ENCODE measurements at regions of chr10 and their contacts with region 1.

Region 1: DNA sequence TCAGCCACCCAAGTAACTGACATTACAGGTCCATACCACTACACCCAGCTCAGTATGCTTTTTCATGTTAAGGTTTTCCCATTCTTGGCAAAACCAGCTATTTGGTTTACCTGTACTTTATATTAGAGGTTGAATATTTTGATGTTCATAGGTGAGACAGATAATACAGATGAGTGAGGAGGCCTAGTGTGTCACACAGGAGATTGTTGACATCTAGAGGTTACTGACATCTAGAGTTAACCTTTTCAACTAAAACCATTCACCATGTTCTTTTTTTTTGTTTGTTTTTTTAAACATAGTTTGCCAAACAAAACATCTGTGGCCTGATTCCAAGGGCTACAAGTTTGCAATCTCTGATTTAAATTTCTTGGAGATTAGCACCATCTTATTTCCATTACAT is 8.0 kb downstream of the GHITM start:
- DNase-seq: no peak
- ATAC-seq: no peak
- H3K4me3 Mint-ChIP-seq: no peak overlapping the region
- H3K27ac Mint-ChIP-seq: no peak overlapping the region
- H3K4me1 Mint-ChIP-seq: peaks cover 5% of the 10 kb centered on the region
- H3K27me3 Mint-ChIP-seq: no peaks in the 10 kb centered on the region
- CTCF ChIP-seq: no peak

Region 2: DNA sequence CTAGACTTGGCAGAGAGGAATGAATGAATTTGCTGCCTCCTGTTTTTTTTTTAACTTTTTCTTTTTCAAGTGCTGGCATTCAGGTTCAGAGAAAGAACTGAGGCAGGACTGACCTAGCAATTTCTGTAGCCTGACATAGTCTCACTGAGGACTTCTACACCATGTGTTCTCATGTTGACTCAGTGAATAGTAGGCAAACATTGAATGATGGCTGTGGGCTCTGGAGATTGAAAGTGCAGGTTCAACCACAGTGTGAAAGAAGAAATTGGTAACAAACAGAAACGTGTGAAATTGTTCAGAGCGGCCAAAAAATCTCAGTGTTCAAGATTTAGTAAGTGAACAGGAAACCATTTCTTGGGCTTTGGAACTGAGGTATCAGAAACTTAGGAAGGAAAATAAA is 330.4 kb before region 1 on chr10:
- CTCF ChIA-PET with region 1: no interaction called
- POLR2A ChIA-PET with region 1: no interaction called
- intact Hi-C with region 1: no loop called
- DNase-seq: no peak
- ATAC-seq: no peak
- H3K4me3 Mint-ChIP-seq: no peak overlapping the region
- H3K27ac Mint-ChIP-seq: no peak overlapping the region
- H3K4me1 Mint-ChIP-seq: no peaks in the 10 kb centered on the region
- H3K27me3 Mint-ChIP-seq: no peaks in the 10 kb centered on the region
- CTCF ChIP-seq: no peak

Region 3: GRCh38 chr10:84163996-84164395 is 16.6 kb after region 1 on chr10:
- CTCF ChIA-PET with region 1: interaction called, 10 read pairs
- POLR2A ChIA-PET with region 1: interaction called, 3 read pairs
- intact Hi-C with region 1: no loop called
- DNase-seq: no peak
- ATAC-seq: no peak
- H3K4me3 Mint-ChIP-seq: no peak overlapping the region
- H3K27ac Mint-ChIP-seq: no peak overlapping the region
- H3K4me1 Mint-ChIP-seq: peaks cover 26% of the 10 kb centered on the region
- H3K27me3 Mint-ChIP-seq: peaks cover 6% of the 10 kb centered on the region
- CTCF ChIP-seq: no peak

Region 4: GRCh38 chr10:84194424-84195040 is 47.2 kb after region 1 on chr10 and contains the start of gene CDHR1:
- CTCF ChIA-PET with region 1: interaction called, 15 read pairs
- POLR2A ChIA-PET with region 1: no interaction called
- intact Hi-C with region 1: no loop called
- DNase-seq: peak; percentile 34
- ATAC-seq: peak; percentile 80
- H3K4me3 Mint-ChIP-seq: peak within 1 kb of the TSS; percentile 60
- H3K27ac Mint-ChIP-seq: no peak within 1 kb of the TSS
- H3K4me1 Mint-ChIP-seq: peaks cover 7% of the 10 kb centered on the region
- H3K27me3 Mint-ChIP-seq: peaks cover 39% of the 10 kb centered on the region
- CTCF ChIP-seq: no peak
- total RNA-seq, gene CDHR1: 2.8 and 3.7 TPM in 2 replicates

Region 5: GRCh38 chr10:84205049-84205852 is 57.9 kb after region 1 on chr10:
- CTCF ChIA-PET with region 1: interaction called, 90 read pairs
- POLR2A ChIA-PET with region 1: interaction called, 5 read pairs
- intact Hi-C with region 1: loop called (anchors 1 kb)
- DNase-seq: peak; percentile 49
- ATAC-seq: peak; percentile 88
- H3K4me3 Mint-ChIP-seq: no peak overlapping the region
- H3K27ac Mint-ChIP-seq: no peak overlapping the region
- H3K4me1 Mint-ChIP-seq: no peaks in the 10 kb centered on the region
- H3K27me3 Mint-ChIP-seq: peaks cover 13% of the 10 kb centered on the region
- CTCF ChIP-seq: no peak

Region 6: DNA sequence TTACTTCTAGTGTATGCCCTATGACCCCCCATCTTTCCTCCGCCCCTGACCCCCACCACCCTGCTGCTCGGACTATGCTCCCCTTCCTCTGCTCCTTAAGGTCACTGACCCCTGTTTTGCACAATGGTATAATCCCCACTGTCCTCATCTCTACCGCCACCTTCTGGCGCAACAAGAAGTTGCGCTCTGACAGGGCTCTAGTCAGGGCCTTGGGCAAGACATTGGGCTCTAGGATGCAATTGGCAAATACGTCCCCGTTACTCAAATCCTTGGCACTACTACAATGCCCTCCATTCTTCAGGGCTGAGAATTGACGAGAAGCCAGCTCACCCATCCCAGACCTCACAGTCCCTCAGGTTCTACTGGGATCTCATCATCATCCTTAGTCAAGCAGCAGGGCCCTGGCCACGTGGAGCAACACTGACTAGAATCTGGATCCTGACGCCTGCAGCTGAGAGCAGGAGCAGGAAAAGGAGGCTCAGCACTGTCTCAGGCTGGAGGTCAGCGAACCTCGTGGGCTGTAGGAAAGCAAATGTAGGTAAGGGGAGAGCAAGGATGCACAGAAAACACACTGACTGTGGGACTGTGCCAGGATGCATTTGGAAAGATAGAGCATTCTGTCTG is 67.4 kb after region 1 on chr10:
- CTCF ChIA-PET with region 1: interaction called, 90 read pairs
- POLR2A ChIA-PET with region 1: no interaction called
- intact Hi-C with region 1: loop called (anchors 2 kb)
- DNase-seq: no peak
- ATAC-seq: peak; percentile 60
- H3K4me3 Mint-ChIP-seq: no peak overlapping the region
- H3K27ac Mint-ChIP-seq: no peak overlapping the region
- H3K4me1 Mint-ChIP-seq: no peaks in the 10 kb centered on the region
- H3K27me3 Mint-ChIP-seq: peaks cover 1% of the 10 kb centered on the region
- CTCF ChIP-seq: no peak